PC-3 (cell line): ENCODE measurements at regions of chr19 and their contacts with region 1.

Region 1: DNA sequence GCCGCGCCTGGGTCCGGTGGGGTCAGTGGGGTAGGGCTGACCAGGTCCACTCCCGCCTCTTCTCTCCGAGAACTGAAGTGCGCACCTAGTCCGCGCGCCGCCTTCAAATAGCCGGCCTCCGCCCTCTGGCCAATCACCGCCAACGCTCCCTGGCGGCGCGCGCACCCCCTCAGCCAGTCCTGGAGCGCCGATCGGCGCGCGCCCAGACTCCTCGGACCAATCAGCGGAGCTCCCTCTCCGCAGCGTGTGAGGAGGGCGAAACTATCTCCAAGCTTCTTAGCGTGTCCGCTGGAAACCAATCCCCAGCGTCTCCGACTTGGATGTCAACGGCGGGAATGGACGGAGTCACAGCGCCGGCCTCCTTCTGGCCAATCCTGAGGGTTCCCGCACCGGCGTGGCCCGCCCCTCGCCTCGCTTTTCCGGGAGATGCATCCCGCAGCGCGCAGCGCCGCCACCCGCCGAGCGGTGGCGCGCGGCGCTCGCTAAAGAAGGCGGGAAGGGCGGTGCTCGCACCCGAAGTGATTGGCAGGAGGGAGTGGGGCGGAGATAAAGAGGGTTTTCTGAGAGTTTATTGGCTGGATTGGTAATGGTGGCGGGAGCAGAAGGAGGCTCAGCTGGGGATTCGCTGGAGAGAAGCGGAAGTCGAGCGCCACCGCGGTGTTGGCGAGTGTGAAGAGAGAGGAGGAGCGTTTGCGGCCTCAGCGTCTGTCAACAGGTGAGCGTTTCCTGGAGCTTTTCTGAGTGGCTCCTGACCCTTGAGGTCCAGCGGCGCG is at the start of gene ASF1B:
- DNase-seq: peak; percentile 100
- ATAC-seq: peak; percentile 89
- H3K4me3 ChIP-seq: peak within 1 kb of the TSS; percentile 83
- H3K27ac ChIP-seq: peak within 1 kb of the TSS; percentile 81
- H3K4me1 ChIP-seq: peaks cover 20% of the 10 kb centered on the region
- H3K27me3 ChIP-seq: no peaks in the 10 kb centered on the region
- CTCF ChIP-seq: peak; percentile 82
- total RNA-seq, gene ASF1B: 71.2 and 84.7 TPM in 2 replicates

Region 2: GRCh38 chr19:14073261-14073924 is 63.3 kb before region 1 on chr19:
- CTCF ChIA-PET with region 1: interaction called, 4 read pairs
- POLR2A ChIA-PET with region 1: interaction called, 5 read pairs
- intact Hi-C with region 1: loop called (anchors 1 kb)
- DNase-seq: peak; percentile 80
- ATAC-seq: peak; percentile 56
- H3K4me3 ChIP-seq: peak overlapping the region; percentile 77
- H3K27ac ChIP-seq: no peak overlapping the region
- H3K4me1 ChIP-seq: peaks cover 19% of the 10 kb centered on the region
- H3K27me3 ChIP-seq: no peaks in the 10 kb centered on the region
- CTCF ChIP-seq: 0 out of 2 replicates have a peak, but pooled peaks have one; percentile 27

Region 3: DNA sequence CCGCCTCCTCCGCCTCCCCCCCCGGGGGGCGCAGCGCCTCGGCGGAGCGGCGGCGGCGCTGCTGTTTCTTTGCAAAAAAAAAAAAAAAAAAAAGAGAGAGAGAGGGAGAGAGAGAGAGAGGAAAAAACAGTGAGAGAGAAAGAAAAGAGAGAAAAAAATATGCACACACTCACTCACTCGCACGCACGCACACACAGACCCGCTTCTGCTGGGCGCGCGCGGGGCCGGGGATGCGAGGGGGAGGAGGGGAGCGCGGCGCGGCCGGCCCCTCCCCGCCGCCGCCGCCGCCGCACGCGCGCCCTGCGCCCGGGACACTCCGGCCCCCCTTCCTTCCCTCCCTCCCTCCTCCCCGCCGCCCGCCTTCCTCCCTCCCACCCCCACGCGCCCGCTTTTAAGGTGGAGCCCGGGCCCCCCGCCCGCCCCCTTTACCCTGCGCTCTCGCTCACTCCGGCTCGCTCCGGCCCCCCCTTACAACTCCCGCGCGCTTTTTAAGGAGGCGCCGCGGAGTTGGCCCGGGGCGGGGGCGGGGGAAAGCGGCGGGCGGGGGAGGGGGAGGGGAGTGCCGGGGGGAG is 46.1 kb before region 1 on chr19 and contains the start of gene SAMD1:
- CTCF ChIA-PET with region 1: interaction called, 11 read pairs
- POLR2A ChIA-PET with region 1: no interaction called
- intact Hi-C with region 1: no loop called
- DNase-seq: peak; percentile 80
- ATAC-seq: peak; percentile 52
- H3K4me3 ChIP-seq: peak within 1 kb of the TSS; percentile 89
- H3K27ac ChIP-seq: no peak within 1 kb of the TSS
- H3K4me1 ChIP-seq: peaks cover 8% of the 10 kb centered on the region; the same call in 1 of the 2 replicates
- H3K27me3 ChIP-seq: no peaks in the 10 kb centered on the region
- CTCF ChIP-seq: no peak
- total RNA-seq, gene SAMD1: 62.2 and 90.5 TPM in 2 replicates

Region 4: GRCh38 chr19:14107581-14108461 is 28.9 kb before region 1 on chr19:
- CTCF ChIA-PET with region 1: no interaction called
- POLR2A ChIA-PET with region 1: no interaction called
- intact Hi-C with region 1: no loop called
- DNase-seq: peak; percentile 18
- ATAC-seq: peak; percentile 53; the same call in 1 of the 2 replicates
- H3K4me3 ChIP-seq: no peak overlapping the region
- H3K27ac ChIP-seq: no peak overlapping the region
- H3K4me1 ChIP-seq: no peaks in the 10 kb centered on the region
- H3K27me3 ChIP-seq: no peaks in the 10 kb centered on the region
- CTCF ChIP-seq: no peak

Region 5: DNA sequence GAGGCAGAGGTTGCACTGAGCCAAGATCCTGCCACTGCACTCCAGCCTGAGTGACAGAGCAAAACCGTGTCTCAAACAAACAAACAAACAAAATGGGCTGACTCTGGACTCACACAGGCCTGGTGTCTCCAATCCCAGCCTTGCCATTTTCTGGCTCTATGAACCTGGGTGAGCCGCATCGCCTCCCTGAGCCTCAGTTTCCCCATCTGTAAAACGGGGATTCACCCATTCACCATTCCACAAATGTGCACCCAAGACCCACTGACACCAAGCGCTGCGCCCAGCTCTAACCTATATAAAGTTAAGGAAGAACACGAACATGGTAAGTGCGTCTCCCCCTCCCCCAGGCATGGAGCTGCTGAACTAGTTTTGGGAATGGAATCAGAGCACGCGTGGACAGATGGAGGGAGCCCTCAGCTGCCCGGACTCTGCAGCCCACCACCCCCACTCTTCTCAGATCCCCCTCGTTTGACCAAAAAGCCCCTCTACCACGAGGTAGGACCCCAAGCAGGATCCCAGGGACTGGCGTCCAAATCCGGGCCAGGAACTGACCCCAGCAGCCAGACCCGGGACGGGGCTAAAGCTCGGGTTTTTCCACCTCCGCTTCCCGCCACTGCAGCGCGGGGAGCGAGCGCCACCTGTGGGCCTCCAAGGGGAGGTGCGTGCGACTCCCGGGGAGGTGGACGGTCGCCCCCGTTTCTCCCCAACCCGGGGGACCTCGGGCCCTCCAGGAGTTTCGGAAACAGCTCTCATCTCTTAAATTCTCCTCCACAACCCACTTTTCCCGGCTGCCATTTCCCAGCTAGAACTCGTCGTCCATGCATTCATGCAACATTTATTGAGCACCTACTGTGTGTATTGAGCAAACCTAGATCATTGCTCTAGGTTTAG is 211.5 kb after region 1 on chr19:
- CTCF ChIA-PET with region 1: interaction called, 32 read pairs
- POLR2A ChIA-PET with region 1: no interaction called
- intact Hi-C with region 1: loop called (anchors 1 kb)
- DNase-seq: peak; percentile 75
- ATAC-seq: peak; percentile 83
- H3K4me3 ChIP-seq: peak overlapping the region; percentile 70
- H3K27ac ChIP-seq: no peak overlapping the region
- H3K4me1 ChIP-seq: peaks cover 5% of the 10 kb centered on the region
- H3K27me3 ChIP-seq: no peaks in the 10 kb centered on the region
- CTCF ChIP-seq: peak; percentile 98

Region 6: GRCh38 chr19:14405758-14406644 is 269.3 kb after region 1 on chr19:
- CTCF ChIA-PET with region 1: interaction called, 5 read pairs
- POLR2A ChIA-PET with region 1: interaction called, 7 read pairs
- intact Hi-C with region 1: loop called (anchors 2 kb)
- DNase-seq: peak; percentile 89
- ATAC-seq: peak; percentile 67
- H3K4me3 ChIP-seq: no peak overlapping the region
- H3K27ac ChIP-seq: no peak overlapping the region
- H3K4me1 ChIP-seq: peaks cover 4% of the 10 kb centered on the region; the same call in 1 of the 2 replicates
- H3K27me3 ChIP-seq: no peaks in the 10 kb centered on the region
- CTCF ChIP-seq: peak; percentile 60